Ovary (tissue), 10 donors: ENCODE measurements at regions of chr18 and their contacts with region 1.

Region 1: DNA sequence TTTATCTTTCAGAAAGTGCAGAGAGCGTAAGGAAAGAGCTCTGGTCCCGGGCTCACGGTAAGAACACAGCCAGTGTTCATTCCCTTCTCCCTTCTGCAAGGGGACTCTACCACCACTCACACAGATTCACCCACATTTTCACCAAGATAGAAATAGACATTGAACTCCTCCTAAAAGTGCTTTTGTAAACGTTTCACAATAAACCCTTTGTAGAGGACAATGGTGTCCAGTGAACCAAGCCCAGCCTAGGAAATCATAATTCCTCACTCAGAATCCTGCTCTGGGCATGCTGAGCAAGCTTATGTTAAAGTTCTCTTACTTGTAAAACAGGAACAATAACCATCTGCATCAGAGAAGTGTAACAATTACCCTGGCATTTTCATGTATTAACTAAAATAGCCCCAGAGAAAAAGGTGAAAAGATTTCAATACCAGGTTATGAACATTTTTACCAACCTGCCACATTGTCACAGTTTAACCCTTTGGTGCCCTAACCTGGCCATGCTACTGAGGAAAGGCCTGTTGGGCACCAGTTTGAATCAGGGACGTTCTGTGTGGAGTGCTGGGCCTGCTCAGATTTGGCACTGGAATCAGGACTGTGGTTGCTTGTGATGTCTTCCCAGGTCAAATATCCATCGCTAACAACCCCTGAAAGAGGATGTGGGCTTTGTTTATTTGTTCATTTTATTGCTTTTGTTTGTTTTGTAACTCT is 22.5 kb upstream of the NDUFV2 start:
- DNase-seq: no peak
- H3K4me3 ChIP-seq: no peak overlapping the region
- H3K27ac ChIP-seq: no peak overlapping the region
- H3K4me1 ChIP-seq: no peaks in the 10 kb centered on the region
- H3K27me3 ChIP-seq: no peaks in the 10 kb centered on the region
- CTCF ChIP-seq: no peak
- EP300 ChIP-seq: no peak
- POLR2A ChIP-seq: no peak

Region 2: GRCh38 chr18:8988261-8988871 is 91.6 kb before region 1 on chr18:
- intact Hi-C with region 1: no loop called
- DNase-seq: peak; percentile 27 to 60 (median 49)
- H3K4me3 ChIP-seq: no peak overlapping the region
- H3K27ac ChIP-seq: no peak overlapping the region
- H3K4me1 ChIP-seq: no peaks in the 10 kb centered on the region
- H3K27me3 ChIP-seq: no peaks in the 10 kb centered on the region
- CTCF ChIP-seq: peak; percentile 30 to 53 (median 36)
- EP300 ChIP-seq: no peak
- POLR2A ChIP-seq: no peak

Region 3: DNA sequence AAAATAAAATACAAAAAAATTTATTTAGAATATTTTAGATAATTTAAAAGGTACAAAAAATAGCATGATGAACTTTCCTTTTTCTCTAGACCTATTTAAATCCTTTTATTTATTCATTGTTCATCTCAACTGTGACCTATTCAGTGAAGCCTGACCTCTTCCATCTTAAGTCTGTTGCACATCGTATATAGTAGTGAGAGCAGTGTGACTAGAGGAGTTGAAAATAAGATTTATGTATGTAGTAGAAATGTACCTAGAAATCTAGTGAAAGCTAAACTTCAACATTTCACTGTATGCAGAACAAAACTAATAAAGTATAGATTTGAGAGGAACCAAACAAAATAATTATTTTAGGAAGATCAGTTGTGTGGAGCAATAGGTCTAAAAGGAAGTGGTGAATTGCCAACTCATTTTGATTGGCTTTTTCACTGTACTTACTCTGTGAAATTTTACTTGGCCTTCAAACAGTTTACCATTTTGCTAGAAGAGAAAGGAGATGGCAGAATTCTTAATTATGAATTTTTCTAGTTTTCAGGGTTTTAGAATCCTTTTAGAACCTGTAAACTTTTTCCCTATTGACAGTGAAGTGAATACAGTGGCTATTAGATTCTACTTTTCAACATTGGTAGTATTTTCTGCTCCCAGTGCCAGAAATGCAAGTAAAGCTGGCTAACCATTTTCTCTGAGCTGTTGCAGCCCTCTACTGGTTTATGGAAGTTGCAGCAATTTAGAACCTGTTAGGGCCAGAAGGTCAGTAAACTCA is 67.6 kb after region 1 on chr18:
- intact Hi-C with region 1: loop called in 2 of 4 experiments (anchors 5 to 10 kb)
- DNase-seq: peak in 1 of 5 donors; percentile 42
- H3K4me3 ChIP-seq: no peak overlapping the region
- H3K27ac ChIP-seq: no peak overlapping the region
- H3K4me1 ChIP-seq: peaks cover 3% of the 10 kb centered on the region
- H3K27me3 ChIP-seq: no peaks in the 10 kb centered on the region
- CTCF ChIP-seq: peak; percentile 28 to 71 (median 65)
- EP300 ChIP-seq: no peak
- POLR2A ChIP-seq: no peak

Region 4: DNA sequence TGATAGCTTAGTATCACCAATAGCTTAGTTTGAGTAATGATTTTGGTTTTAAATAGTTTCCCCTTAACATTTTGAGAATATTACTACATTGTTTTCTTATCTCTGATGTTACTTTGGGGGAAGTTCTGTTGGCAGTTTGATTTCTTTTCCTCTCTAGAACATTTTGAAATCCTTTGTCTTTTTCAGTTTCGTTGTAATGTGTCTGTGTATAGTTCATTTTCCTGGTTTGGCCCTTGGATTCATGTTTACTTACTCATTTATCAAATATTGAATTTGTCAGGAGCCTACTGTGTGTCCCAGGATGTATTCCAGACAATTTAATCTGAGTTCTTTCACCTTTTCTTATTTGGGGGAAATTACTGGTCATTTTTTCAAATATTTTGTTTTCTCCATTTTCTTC is 73.3 kb after region 1 on chr18:
- intact Hi-C with region 1: loop called in 2 of 4 experiments (anchors 5 to 10 kb)
- DNase-seq: no peak
- H3K4me3 ChIP-seq: no peak overlapping the region
- H3K27ac ChIP-seq: no peak overlapping the region
- H3K4me1 ChIP-seq: peaks cover 6% of the 10 kb centered on the region
- H3K27me3 ChIP-seq: no peaks in the 10 kb centered on the region
- CTCF ChIP-seq: no peak
- EP300 ChIP-seq: no peak
- POLR2A ChIP-seq: no peak

Region 5: GRCh38 chr18:9516437-9517064 is 436.6 kb after region 1 on chr18:
- intact Hi-C with region 1: loop called in 1 of 4 experiments (anchors 10 kb)
- DNase-seq: no peak
- H3K4me3 ChIP-seq: no peak overlapping the region
- H3K27ac ChIP-seq: no peak overlapping the region
- H3K4me1 ChIP-seq: peaks cover 3% of the 10 kb centered on the region
- H3K27me3 ChIP-seq: no peaks in the 10 kb centered on the region
- CTCF ChIP-seq: peak; percentile 33 to 46 (median 41)
- EP300 ChIP-seq: no peak
- POLR2A ChIP-seq: no peak